ENCODE measurements at regions of chrX and their contacts with region 1.

Region 1: DNA sequence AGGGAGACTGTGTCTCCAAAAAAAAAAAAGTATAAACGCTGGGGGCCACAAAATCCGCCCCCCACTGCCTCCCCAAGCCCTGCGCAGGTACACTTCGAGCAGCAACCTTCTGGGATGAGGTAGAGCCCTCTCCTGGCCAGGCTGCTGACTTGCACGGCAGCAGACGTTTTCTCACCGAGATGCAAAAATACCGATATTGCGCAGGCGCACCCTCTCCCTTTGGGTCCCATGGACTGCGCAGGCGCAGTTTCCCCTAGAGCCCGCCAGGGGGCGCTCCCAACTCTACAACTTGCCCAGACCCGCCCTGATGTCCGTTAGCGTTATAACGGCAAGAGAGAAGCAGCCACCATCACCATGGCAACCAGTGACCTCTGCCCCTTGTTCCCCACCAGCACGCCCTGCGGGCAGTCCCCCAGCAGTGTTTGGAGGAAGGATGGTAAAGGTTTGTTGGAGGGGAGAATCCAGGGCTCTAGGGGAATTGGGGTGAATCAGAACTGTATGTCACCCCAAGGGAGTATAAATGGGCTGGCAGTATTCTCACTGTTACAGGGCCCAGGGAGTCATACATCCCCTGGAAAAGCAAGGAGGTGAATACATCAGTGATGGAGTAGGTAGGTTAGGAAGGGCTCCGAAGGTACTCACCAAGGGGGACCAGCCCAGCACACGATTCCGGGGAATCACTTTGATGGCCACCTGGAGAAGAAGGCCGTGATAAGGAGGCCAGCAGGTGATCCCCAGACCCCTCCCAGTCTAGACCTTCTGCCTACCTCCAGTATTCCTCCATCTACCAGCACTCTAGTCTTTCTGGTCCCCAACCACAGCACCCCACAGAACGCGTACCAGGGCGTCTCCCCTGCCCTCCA is 1.5 kb downstream of the PIM2 start:
- DNase-seq: peak; percentile 93
- ATAC-seq: peak; percentile 76

Region 2: DNA sequence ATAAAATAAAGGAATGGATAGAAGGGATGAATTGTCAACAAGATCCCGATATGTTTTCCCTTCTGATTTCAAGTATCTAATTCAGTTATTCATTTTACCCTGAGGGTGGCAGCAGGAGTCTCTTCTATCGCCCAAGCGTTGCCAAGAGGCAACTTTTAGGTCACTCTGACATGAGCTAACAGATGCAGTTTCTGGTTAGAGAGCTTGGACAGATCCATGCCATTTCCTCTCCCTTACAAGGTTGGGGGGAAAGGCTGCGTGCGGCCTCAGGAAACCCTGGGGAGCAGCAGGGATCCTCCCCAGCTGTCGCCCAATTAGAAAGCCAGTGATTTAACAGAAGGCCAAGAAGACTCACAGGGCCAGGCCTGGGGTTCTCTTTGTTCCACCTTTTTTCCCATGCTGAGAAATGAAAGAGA is 269.0 kb before region 1 on chrX:
- intact Hi-C with region 1: loop called (anchors 10 kb)
- DNase-seq: no peak
- ATAC-seq: peak; percentile 63

Region 3: GRCh38 chrX:48957827-48958634 is 40.7 kb after region 1 on chrX:
- intact Hi-C with region 1: loop called (anchors 5 kb)
- DNase-seq: peak; percentile 98
- ATAC-seq: peak; percentile 96